MCF 10A (cell line): ENCODE measurements at regions of chrX and their contacts with region 1.

Region 1: DNA sequence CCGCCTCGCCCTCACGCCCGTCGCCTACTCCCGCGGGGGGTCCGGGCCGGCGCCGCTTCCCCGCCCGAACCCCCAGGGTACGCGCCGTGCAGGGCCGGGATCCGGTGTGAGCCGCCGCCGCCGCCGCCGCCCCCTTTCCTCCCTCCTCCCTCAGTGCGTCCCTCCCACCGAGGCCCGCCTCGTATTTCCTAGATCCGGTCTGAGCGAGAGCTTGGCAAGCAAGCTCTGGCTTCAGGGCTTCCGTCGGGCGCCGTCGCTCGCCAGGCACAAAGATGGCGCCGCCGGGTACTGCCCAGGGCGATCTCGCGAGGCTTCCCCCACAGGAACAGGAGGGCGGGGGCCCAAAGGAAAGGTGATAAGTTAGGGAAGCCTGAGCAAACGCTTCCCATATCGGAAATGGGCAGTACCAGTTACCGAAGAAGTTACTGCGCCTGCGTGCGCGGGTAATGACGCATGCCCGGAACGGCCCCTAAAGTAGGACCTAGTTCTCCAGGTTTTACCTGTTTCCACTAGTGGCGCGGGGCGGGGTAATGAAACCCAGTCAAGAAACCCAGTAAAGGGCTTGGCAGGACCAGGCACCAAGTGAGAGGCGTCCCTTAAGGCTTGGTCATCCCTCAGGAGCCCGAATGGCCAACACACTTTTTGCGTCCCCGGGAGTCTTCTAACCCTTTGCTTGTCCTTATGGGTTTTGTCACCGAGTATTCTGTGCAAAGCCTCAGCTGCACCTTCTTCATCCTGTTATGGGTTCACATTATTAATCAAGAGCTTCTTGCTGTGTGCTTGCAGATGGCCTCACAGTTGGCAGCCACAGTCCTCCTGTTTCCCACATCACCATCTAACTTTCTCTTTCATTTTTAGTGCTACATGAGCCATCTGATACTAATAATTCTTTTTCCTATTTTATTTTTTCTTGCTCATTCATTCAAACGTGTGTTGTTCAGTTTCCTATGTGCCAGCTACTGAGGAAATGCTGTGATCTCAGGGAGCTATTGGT is at the start of gene TAB3:
- DNase-seq: peak; percentile 95
- H3K4me3 Mint-ChIP-seq: peak within 1 kb of the TSS; percentile 89
- H3K27ac Mint-ChIP-seq: peak within 1 kb of the TSS; percentile 87
- H3K4me1 Mint-ChIP-seq: peaks cover 27% of the 10 kb centered on the region
- H3K27me3 Mint-ChIP-seq: peaks cover 33% of the 10 kb centered on the region
- CTCF ChIP-seq: no peak
- total RNA-seq, gene TAB3: 27.5 and 28.4 TPM in 2 replicates

Region 2: GRCh38 chrX:30875961-30876360 is 13.5 kb before region 1 on chrX:
- CTCF ChIA-PET with region 1: interaction called, 5 read pairs
- POLR2A ChIA-PET with region 1: interaction called, 49 read pairs
- intact Hi-C with region 1: no loop called
- DNase-seq: peak; percentile 88
- H3K4me3 Mint-ChIP-seq: peak overlapping the region; percentile 57
- H3K27ac Mint-ChIP-seq: peak overlapping the region; percentile 96
- H3K4me1 Mint-ChIP-seq: peaks cover 13% of the 10 kb centered on the region
- H3K27me3 Mint-ChIP-seq: peaks cover 13% of the 10 kb centered on the region
- CTCF ChIP-seq: no peak

Region 3: DNA sequence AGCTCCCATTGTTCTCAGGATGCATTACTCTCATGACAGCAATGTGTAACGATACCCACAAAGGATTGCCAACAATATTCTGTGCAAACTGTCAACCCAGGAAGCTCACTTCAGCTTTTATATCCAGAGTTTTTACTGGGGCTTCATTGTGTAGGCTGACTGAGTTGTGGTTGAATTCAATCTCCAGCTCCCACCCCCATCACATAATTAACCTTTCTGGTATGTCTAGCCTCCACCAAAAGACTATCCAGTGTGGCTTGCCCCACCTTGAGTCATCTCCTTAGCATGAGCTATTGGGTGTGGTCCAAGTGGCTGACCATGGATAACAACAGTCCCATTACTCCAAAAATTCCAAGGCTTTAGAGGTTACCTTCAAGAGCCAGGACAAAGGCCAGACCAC is 17.3 kb after region 1 on chrX:
- CTCF ChIA-PET with region 1: interaction called, 3 read pairs
- POLR2A ChIA-PET with region 1: interaction called, 21 read pairs
- intact Hi-C with region 1: no loop called
- DNase-seq: peak; percentile 43
- H3K4me3 Mint-ChIP-seq: peak overlapping the region; percentile 23
- H3K27ac Mint-ChIP-seq: peak overlapping the region; percentile 75
- H3K4me1 Mint-ChIP-seq: peaks cover 11% of the 10 kb centered on the region
- H3K27me3 Mint-ChIP-seq: no peaks in the 10 kb centered on the region
- CTCF ChIP-seq: no peak

Region 4: DNA sequence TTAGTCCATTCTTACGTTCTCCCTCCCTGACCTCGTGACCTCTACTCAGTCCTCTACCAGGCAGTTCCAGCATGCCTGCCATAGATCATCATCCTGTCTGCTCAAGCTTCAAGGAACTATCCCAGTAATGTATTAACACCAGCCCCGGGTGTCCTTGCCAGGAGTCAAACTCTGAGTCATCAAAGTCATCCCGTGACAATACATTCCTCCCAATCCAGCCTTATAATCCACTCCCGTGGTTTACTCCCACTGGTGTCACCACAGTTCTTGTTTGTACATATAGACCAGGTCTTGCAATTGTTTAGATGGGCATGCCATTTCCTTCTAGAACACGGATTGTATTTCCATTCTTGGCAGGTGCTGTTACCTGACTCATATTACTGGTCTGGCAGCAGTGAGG is 68.3 kb after region 1 on chrX:
- CTCF ChIA-PET with region 1: no interaction called
- POLR2A ChIA-PET with region 1: interaction called, 4 read pairs
- intact Hi-C with region 1: loop called (anchors 5 kb)
- DNase-seq: peak; percentile 64
- H3K4me3 Mint-ChIP-seq: no peak overlapping the region
- H3K27ac Mint-ChIP-seq: peak overlapping the region; percentile 82
- H3K4me1 Mint-ChIP-seq: peaks cover 10% of the 10 kb centered on the region
- H3K27me3 Mint-ChIP-seq: peaks cover 12% of the 10 kb centered on the region
- CTCF ChIP-seq: no peak